CD4-positive, alpha-beta memory T cell (primary cell): ENCODE measurements at regions of chr19 and their contacts with region 1.

Region 1: DNA sequence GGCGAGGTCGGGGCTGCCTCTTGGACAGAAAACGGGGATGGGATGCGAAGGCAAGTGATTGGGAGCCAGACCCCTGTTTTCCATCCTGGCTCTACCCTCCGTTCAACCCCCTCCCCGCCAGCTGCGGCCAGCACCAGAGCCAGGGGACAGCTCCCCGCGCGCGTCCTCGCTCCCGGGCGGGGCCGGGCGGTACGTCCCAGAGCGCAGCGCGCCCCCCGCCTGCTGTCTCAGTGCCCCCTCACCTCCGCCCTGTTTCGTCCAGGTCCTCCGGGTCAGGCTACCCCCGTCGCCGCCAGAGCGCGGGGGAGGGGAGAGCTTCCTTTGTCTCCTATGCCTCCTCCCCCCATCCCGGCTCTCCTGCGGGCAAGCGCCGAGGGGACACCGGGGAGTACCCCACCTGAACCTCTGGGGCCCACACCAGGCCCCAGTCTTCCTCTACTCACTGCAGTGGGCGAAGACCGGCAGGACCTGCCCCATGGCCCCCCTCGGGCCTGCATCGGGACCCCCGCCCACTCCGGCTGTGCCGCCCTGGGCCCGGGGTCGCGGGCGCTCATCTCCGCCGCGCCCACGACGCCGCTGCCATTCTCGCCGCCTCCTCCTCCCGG is 396 bp downstream of the RTN2 start:
- DNase-seq: peak; percentile 26 to 55 (median 44)
- H3K4me3 ChIP-seq: peak overlapping the region; percentile 23 to 54
- H3K4me3 Mint-ChIP-seq: peak overlapping the region; percentile 57 to 79 (median 69)
- H3K27ac ChIP-seq: no peak overlapping the region
- H3K27ac Mint-ChIP-seq: peak overlapping the region in 1 of 7 donors; percentile 91
- H3K4me1 ChIP-seq: peaks cover 44% of the 10 kb centered on the region
- H3K4me1 Mint-ChIP-seq: peaks cover 23 to 58% (median 41%) of the 10 kb centered on the region in 4 donors
- H3K27me3 ChIP-seq: peaks cover 10% of the 10 kb centered on the region
- H3K27me3 Mint-ChIP-seq: peaks cover 5 to 7% of the 10 kb centered on the region in 2 donors

Region 2: GRCh38 chr19:45391340-45391739 is 105.1 kb before region 1 on chr19:
- CTCF ChIA-PET with region 1: no interaction called
- POLR2A ChIA-PET with region 1: no interaction called
- intact Hi-C with region 1: no loop called
- DNase-seq: no peak
- H3K4me3 ChIP-seq: no peak overlapping the region
- H3K4me3 Mint-ChIP-seq: no peak overlapping the region
- H3K27ac ChIP-seq: no peak overlapping the region
- H3K27ac Mint-ChIP-seq: peak overlapping the region in 1 of 7 donors; percentile 68
- H3K4me1 ChIP-seq: no peaks in the 10 kb centered on the region
- H3K4me1 Mint-ChIP-seq: no peaks in the 10 kb centered on the region
- H3K27me3 ChIP-seq: peaks cover 1% of the 10 kb centered on the region
- H3K27me3 Mint-ChIP-seq: peaks cover 4 to 10% of the 10 kb centered on the region in 2 donors

Region 3: GRCh38 chr19:45478454-45479238 is 17.8 kb before region 1 on chr19:
- CTCF ChIA-PET with region 1: interaction called, 12 read pairs
- POLR2A ChIA-PET with region 1: interaction called, 5 read pairs
- intact Hi-C with region 1: no loop called
- DNase-seq: peak; percentile 91 to 92 (median 91)
- H3K4me3 ChIP-seq: peak overlapping the region; percentile 51 to 74
- H3K4me3 Mint-ChIP-seq: peak overlapping the region; percentile 62 to 93 (median 84)
- H3K27ac ChIP-seq: peak overlapping the region; percentile 93
- H3K27ac Mint-ChIP-seq: peak overlapping the region; percentile 97 to 99 (median 98)
- H3K4me1 ChIP-seq: peaks cover 14% of the 10 kb centered on the region
- H3K4me1 Mint-ChIP-seq: peaks cover 25 to 46% (median 28%) of the 10 kb centered on the region in 4 donors
- H3K27me3 ChIP-seq: no peaks in the 10 kb centered on the region
- H3K27me3 Mint-ChIP-seq: peaks cover 1% of the 10 kb centered on the region in 2 donors

Region 4: GRCh38 chr19:45558399-45558878 is 62.0 kb after region 1 on chr19:
- CTCF ChIA-PET with region 1: interaction called, 8 read pairs
- POLR2A ChIA-PET with region 1: no interaction called
- intact Hi-C with region 1: loop called (anchors 1 kb)
- DNase-seq: peak; percentile 73 to 78 (median 76)
- H3K4me3 ChIP-seq: no peak overlapping the region
- H3K4me3 Mint-ChIP-seq: peak overlapping the region in 1 of 8 donors; percentile 34
- H3K27ac ChIP-seq: no peak overlapping the region
- H3K27ac Mint-ChIP-seq: peak overlapping the region in 4 of 7 donors; percentile 5 to 59 (median 34)
- H3K4me1 ChIP-seq: peaks cover 25% of the 10 kb centered on the region
- H3K4me1 Mint-ChIP-seq: peaks cover 9 to 32% (median 16%) of the 10 kb centered on the region in 4 donors
- H3K27me3 ChIP-seq: no peaks in the 10 kb centered on the region
- H3K27me3 Mint-ChIP-seq: no peaks in the 10 kb centered on the region

Region 5: GRCh38 chr19:46346821-46347571 is 850.5 kb after region 1 on chr19 and contains the start of gene PPP5C:
- CTCF ChIA-PET with region 1: no interaction called
- POLR2A ChIA-PET with region 1: no interaction called
- intact Hi-C with region 1: loop called (anchors 5 kb)
- DNase-seq: peak; percentile 81 to 86 (median 85)
- H3K4me3 ChIP-seq: peak within 1 kb of the TSS; percentile 74 to 100
- H3K4me3 Mint-ChIP-seq: peak within 1 kb of the TSS; percentile 90 to 96 (median 94)
- H3K27ac ChIP-seq: peak within 1 kb of the TSS; percentile 72
- H3K27ac Mint-ChIP-seq: peak within 1 kb of the TSS; percentile 82 to 96 (median 92)
- H3K4me1 ChIP-seq: peaks cover 47% of the 10 kb centered on the region
- H3K4me1 Mint-ChIP-seq: peaks cover 39 to 66% (median 52%) of the 10 kb centered on the region in 4 donors
- H3K27me3 ChIP-seq: no peaks in the 10 kb centered on the region
- H3K27me3 Mint-ChIP-seq: no peaks in the 10 kb centered on the region
- total RNA-seq, gene PPP5C: 36.9 to 38.5 TPM